H1 (cell line): ENCODE measurements at regions of chr11 and their contacts with region 1.

Region 1: DNA sequence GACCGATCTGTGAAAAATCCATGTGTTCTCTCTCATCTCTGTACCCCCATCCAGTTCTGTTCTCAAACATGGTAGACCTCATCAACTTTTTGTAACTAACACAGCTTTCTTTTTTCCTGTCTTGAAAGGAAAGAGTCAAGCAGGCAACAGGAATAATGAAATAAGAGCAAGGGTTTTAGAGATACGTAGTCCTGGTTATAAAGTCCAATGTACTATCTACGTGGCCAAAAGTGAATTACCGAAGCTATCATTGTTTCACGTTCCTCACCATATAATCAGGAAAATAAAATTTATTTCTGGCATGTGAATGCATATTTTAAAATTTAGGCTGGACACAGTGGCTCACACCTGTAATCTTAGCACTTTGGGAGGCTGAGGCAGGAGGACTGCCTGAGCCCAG is 472.2 kb upstream of the ANO3 start:
- DNase-seq: no peak
- H3K4me3 ChIP-seq: no peak overlapping the region
- H3K27ac ChIP-seq: no peak overlapping the region
- H3K4me1 ChIP-seq: no peaks in the 10 kb centered on the region
- H3K27me3 ChIP-seq: no peaks in the 10 kb centered on the region
- CTCF ChIP-seq: no peak
- EP300 ChIP-seq: no peak
- POLR2A ChIP-seq: no peak
- RAD21 ChIP-seq: no peak

Region 2: GRCh38 chr11:25794804-25795203 is 65.0 kb before region 1 on chr11:
- CTCF ChIA-PET with region 1: no interaction called
- POLR2A ChIA-PET with region 1: no interaction called
- DNase-seq: no peak
- H3K4me3 ChIP-seq: no peak overlapping the region
- H3K27ac ChIP-seq: no peak overlapping the region
- H3K4me1 ChIP-seq: no peaks in the 10 kb centered on the region
- H3K27me3 ChIP-seq: no peaks in the 10 kb centered on the region
- CTCF ChIP-seq: peak in 2 of 3 experiments; percentile 9 to 43; a peak in 1 of 4 replicates
- EP300 ChIP-seq: no peak
- POLR2A ChIP-seq: no peak
- RAD21 ChIP-seq: peak; percentile 31 to 52

Region 3: DNA sequence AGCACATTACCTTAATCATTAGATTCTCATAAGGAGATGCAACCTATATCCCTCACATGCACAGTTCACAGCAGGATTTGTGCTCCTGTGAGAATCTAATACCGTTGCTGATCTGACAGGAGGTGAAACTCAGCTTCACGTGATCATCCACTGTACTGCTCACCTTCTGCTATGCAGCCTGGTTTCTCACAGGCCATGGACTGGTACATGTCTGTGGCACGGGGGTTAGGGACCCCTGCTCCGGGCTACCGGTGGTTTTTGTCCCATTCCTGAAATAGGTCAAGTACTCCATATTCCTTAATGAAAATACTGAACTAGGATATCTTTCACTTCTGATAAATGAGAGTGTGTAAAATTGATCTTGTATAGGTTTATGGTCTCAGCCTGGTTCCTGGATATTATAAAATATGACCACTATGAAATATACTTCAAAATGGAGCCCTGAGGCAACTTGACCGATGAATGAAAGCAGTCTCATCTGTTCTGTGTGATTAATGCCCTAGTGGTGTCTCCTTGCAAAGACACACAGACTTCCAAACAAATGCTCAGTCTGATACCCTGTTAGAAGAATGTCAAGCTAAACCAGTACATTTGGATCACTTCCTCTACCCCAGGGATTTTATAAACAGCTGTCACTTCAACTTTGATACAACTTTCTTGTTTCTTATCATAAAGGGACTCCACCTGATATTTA is 20.7 kb before region 1 on chr11:
- CTCF ChIA-PET with region 1: interaction called, 11 read pairs
- POLR2A ChIA-PET with region 1: no interaction called
- DNase-seq: no peak
- H3K4me3 ChIP-seq: no peak overlapping the region
- H3K27ac ChIP-seq: no peak overlapping the region
- H3K4me1 ChIP-seq: no peaks in the 10 kb centered on the region
- H3K27me3 ChIP-seq: peaks cover 0 to 1% (median 0%) of the 10 kb centered on the region in 4 experiments; a peak in 1 of 7 replicates
- CTCF ChIP-seq: peak in 1 of 3 experiments; percentile 38; a peak in 1 of 4 replicates
- EP300 ChIP-seq: no peak
- POLR2A ChIP-seq: no peak
- RAD21 ChIP-seq: peak in 1 of 2 experiments; percentile 14; a peak in 1 of 4 replicates

Region 4: DNA sequence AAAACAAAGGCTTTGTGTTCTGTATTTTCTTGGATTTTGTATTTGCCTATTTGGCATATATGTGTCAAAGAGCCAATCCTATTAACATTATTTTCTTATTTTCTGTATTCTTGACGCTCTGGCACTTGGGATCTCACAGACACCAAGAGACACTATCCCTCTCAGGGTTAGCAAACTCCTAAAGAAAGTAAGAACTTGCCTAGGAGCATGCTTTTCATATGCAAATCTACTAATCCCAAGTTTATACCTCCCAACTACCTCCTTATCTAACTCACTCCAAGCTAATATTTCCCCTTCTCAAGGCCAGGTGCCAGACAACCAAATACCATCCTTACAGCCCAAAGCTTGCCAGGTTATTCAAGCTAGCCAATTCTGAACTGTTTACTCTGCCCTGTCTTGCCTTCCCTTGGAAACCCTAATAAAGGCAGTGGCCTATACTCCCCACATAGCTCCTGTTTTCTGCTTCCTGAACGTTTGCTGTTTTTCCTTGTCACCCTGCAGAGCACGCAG is 16.7 kb after region 1 on chr11:
- CTCF ChIA-PET with region 1: no interaction called
- POLR2A ChIA-PET with region 1: no interaction called
- DNase-seq: no peak
- H3K4me3 ChIP-seq: peak overlapping the region in 1 of 4 experiments; percentile 32; a peak in 1 of 8 replicates
- H3K27ac ChIP-seq: no peak overlapping the region
- H3K4me1 ChIP-seq: peaks cover 0 to 5% (median 0%) of the 10 kb centered on the region in 4 experiments; a peak in 3 of 7 replicates
- H3K27me3 ChIP-seq: no peaks in the 10 kb centered on the region
- CTCF ChIP-seq: no peak
- EP300 ChIP-seq: no peak
- POLR2A ChIP-seq: no peak
- RAD21 ChIP-seq: no peak